ENCODE measurements at regions of chr10 and their contacts with region 1.

Region 1: DNA sequence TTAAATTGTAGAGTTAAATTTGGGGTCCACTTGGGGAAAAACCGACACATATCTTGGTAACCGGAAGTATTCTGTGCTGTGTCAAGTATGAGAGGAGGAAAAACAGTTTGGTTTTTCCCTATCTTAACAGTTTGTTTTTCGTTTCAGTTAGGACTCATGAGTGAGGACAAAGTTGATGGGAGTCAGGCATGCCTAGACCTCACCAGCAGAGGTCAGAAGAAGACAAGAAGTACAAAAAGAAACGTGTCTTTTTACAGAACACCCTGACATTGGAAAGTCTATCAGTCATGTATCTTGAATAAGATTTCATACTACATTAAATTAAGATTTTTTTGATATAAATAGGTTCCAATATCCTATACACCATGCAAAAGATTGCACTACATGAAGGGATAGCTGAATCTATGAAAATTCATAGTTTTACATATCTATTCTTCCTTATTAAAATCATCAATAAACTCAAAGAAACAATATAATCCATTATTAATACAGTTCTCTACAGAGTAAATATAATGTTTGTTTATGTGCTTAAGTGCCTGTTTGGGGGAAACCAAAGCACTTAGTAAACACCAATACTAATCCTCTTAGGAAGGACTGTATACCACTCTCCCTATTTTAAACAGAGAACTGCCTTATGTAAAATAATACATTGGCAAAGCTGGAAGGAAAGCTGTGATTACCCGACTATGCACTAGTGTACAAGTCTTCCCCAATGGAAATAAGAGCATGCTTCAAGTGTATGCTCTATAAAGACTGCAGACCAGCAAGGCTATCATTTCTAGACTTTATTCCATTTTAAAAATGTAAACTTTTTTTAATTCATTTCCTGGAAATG is 95.6 kb downstream of the USP6NL start:
- DNase-seq: peak; percentile 73
- H3K4me3 Mint-ChIP-seq: peak overlapping the region; percentile 10
- H3K27ac Mint-ChIP-seq: peak overlapping the region; percentile 25
- H3K4me1 Mint-ChIP-seq: peaks cover 21% of the 10 kb centered on the region
- H3K27me3 Mint-ChIP-seq: no peaks in the 10 kb centered on the region

Region 2: DNA sequence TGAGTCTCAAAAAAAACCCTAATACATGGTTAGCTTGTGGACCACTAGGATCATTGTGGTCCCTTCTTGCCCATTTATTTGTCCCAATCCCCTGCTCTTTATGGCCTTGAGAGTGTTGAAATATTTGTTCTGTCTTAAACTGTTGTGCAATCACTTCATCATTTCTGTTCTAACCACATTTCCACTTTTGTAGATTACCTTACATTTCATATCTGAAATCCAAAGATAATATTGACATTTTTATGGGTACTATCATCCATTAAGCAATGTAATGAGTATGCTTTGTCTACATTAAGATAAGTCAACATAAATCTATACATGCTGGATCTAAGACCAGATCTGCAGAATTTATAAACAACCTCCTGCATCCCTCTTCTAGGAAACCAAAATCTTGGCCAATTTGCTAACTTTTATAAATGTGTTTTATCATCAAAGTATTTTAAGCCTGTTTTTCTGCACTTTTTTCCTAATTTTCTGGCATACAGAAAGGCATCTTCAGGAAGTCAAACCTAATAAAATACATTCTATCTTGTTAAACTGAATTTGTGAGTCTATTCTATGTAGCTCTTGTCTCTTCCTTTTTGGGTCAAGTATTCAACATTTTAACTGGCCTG is 857.5 kb before region 1 on chr10:
- CTCF ChIA-PET with region 1: no interaction called
- intact Hi-C with region 1: no loop called
- DNase-seq: no peak
- H3K4me3 Mint-ChIP-seq: no peak overlapping the region
- H3K27ac Mint-ChIP-seq: no peak overlapping the region
- H3K4me1 Mint-ChIP-seq: no peaks in the 10 kb centered on the region
- H3K27me3 Mint-ChIP-seq: peaks cover 27% of the 10 kb centered on the region

Region 3: GRCh38 chr10:11505639-11506038 is 10.2 kb before region 1 on chr10:
- CTCF ChIA-PET with region 1: interaction called, 14 read pairs
- intact Hi-C with region 1: no loop called
- DNase-seq: peak; percentile 71
- H3K4me3 Mint-ChIP-seq: no peak overlapping the region
- H3K27ac Mint-ChIP-seq: peak overlapping the region; percentile 60
- H3K4me1 Mint-ChIP-seq: peaks cover 18% of the 10 kb centered on the region
- H3K27me3 Mint-ChIP-seq: no peaks in the 10 kb centered on the region

Region 4: DNA sequence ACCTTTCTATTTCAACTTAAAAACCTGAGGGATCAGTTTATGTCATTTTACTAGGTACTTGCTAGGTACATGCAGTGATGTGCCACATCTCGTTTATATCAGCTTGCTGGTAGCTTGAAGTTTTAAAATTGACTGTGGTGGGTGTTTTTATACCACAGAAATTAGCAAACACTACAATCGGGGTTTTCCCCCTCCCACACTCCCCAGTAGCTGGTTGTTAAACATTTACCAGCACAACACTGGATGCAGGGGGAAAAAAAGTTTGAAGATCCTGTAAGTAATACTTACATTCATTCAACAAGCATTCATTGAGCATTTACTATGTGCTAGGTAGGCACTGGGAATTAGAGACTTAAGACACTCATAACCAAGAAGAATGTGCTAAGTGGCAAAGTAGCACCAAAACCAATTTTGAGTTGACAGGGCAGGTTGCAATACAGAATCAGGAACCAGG is 63.0 kb after region 1 on chr10:
- CTCF ChIA-PET with region 1: interaction called, 11 read pairs
- intact Hi-C with region 1: loop called (anchors 1 kb)
- DNase-seq: peak; percentile 84
- H3K4me3 Mint-ChIP-seq: no peak overlapping the region
- H3K27ac Mint-ChIP-seq: peak overlapping the region; percentile 25
- H3K4me1 Mint-ChIP-seq: peaks cover 58% of the 10 kb centered on the region
- H3K27me3 Mint-ChIP-seq: no peaks in the 10 kb centered on the region

Region 5: DNA sequence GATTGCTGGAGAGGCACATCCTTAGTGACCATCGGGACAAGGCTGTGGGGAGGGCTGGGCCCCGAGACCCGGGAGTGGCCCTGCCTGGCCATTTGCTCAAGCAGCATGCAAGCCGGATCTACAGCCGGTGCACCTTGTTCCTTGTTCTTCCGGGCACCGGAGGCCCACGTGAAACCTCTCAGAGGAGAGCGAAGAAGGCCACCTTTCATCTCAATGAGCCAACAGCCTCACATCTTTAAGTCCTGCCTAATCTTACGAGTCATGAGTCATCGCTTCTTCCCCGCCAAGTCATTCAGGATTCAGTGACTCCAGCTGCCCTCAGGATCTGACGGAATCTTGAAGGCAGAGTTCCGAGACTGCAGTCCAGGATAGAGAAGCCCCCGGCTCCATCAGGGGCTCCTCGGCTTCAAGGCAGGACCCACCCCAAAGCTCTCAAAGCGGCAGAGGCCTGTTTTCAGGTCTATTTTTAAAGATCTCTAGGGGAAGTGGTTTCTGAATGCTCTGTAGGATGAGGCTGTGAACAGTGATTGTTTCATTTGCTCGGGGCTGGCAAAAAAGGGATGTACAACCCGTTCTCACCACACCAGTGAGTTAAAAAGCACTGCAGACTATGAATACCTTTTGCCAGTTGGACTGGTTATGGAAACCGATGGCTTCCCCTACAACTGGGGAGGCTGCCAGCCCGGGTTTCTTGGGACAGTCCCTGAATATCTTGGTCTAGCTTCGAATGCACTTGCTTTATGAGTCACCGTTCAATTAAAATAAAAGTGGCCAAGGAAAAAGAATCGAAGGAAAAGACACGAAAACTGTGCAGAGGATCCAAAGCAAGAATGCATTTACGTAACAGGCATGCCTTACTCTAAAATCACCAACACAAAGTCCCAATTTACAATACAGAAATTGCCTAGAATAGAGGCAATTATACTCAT is 169.2 kb after region 1 on chr10:
- CTCF ChIA-PET with region 1: interaction called, 6 read pairs
- intact Hi-C with region 1: loop called (anchors 1 kb)
- DNase-seq: peak; percentile 86
- H3K4me3 Mint-ChIP-seq: peak overlapping the region; percentile 75
- H3K27ac Mint-ChIP-seq: peak overlapping the region; percentile 95
- H3K4me1 Mint-ChIP-seq: peaks cover 36% of the 10 kb centered on the region
- H3K27me3 Mint-ChIP-seq: peaks cover 1% of the 10 kb centered on the region

Region 6: GRCh38 chr10:11757821-11758463 is 242.1 kb after region 1 on chr10:
- CTCF ChIA-PET with region 1: interaction called, 79 read pairs
- intact Hi-C with region 1: loop called (anchors 1 kb)
- DNase-seq: peak; percentile 95
- H3K4me3 Mint-ChIP-seq: no peak overlapping the region
- H3K27ac Mint-ChIP-seq: no peak overlapping the region
- H3K4me1 Mint-ChIP-seq: peaks cover 5% of the 10 kb centered on the region
- H3K27me3 Mint-ChIP-seq: no peaks in the 10 kb centered on the region

Region 7: GRCh38 chr10:12121673-12122072 is 605.9 kb after region 1 on chr10:
- CTCF ChIA-PET with region 1: no interaction called
- intact Hi-C with region 1: loop called (anchors 1 kb)
- DNase-seq: no peak
- H3K4me3 Mint-ChIP-seq: no peak overlapping the region
- H3K27ac Mint-ChIP-seq: peak overlapping the region; percentile 98
- H3K4me1 Mint-ChIP-seq: peaks cover 30% of the 10 kb centered on the region
- H3K27me3 Mint-ChIP-seq: no peaks in the 10 kb centered on the region

Measured in activated naive CD4-positive, alpha-beta T cell treated with anti-CD3 and anti-CD28 coated beads for 36 hours (primary cell).